SK-N-SH (cell line): ENCODE measurements at regions of chrX and their contacts with region 1.

Region 1: DNA sequence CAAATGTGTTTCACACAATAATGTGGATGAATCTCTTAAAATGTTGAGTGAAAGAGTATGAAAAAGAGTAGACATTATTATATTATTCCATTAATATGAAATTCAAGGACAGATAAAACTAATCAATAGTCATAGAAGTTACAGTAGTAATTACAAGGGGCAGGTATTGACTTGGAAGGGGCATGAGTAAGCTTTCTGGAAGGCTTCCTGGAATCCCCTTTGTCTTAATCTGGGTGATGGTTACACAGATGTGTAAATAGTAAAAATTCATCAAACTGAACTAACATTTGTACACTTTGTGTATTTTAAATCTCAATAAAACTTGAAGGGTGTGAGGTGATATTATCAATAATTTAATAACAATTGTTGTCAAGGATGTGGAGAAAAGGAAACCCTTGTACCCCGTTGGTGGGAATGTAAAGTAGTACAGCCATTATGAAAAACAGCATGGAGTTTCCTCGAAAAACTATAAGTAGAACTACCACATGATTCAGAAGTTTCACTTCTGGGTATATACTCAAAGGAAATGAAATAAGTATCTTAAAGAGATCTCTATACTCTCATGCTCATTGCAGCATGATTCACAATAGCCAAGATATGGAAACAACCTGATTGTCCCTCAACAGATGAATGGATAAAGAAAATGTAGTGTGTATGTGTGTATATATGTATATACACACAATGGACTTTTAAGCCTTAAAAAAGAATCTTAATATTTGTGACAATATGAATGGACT is 96.9 kb upstream of the MID1IP1 start:
- DNase-seq: no peak
- H3K4me3 ChIP-seq: no peak overlapping the region
- H3K27ac ChIP-seq: no peak overlapping the region
- H3K4me1 ChIP-seq: no peaks in the 10 kb centered on the region
- H3K27me3 ChIP-seq: no peaks in the 10 kb centered on the region
- CTCF ChIP-seq: no peak
- EP300 ChIP-seq: no peak
- RAD21 ChIP-seq: no peak

Region 2: DNA sequence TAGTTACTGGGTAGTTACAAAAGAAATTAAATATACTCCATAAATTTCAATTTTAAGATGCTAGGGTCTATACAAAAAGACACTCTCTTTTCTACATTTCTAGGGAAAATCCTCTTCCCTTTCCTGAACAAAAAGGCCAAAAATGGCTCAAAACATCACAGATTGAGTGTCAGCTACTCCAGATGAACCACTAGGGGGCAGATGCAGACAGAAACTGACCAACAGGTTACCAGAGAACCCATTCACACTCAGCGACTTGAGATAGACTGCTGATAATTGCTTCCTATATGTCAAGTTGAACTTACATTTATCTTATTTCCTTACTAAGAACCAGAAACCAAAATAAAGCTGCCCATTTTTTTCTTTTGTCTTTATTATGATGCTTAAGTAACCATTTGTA is 13.6 kb after region 1 on chrX:
- CTCF ChIA-PET with region 1: interaction called, 13 read pairs
- POLR2A ChIA-PET with region 1: no interaction called
- DNase-seq: peak; percentile 32
- H3K4me3 ChIP-seq: no peak overlapping the region; a peak in 1 of 4 replicates
- H3K27ac ChIP-seq: no peak overlapping the region
- H3K4me1 ChIP-seq: no peaks in the 10 kb centered on the region
- H3K27me3 ChIP-seq: no peaks in the 10 kb centered on the region
- CTCF ChIP-seq: peak; percentile 63
- EP300 ChIP-seq: no peak
- RAD21 ChIP-seq: peak; percentile 44

Region 3: GRCh38 chrX:38916801-38917200 is 212.5 kb after region 1 on chrX:
- CTCF ChIA-PET with region 1: no interaction called
- POLR2A ChIA-PET with region 1: no interaction called
- DNase-seq: no peak
- H3K4me3 ChIP-seq: no peak overlapping the region
- H3K27ac ChIP-seq: no peak overlapping the region
- H3K4me1 ChIP-seq: no peaks in the 10 kb centered on the region
- H3K27me3 ChIP-seq: no peaks in the 10 kb centered on the region; the same call in 1 of the 2 replicates
- CTCF ChIP-seq: no peak
- EP300 ChIP-seq: no peak
- RAD21 ChIP-seq: no peak